Calu3 (cell line): ENCODE measurements at regions of chrX and their contacts with region 1.

Region 1: GRCh38 chrX:30889147-30890140 is at the start of gene TAB3:
- DNase-seq: peak; percentile 95
- H3K4me3 Mint-ChIP-seq: peak within 1 kb of the TSS; percentile 89
- H3K27ac Mint-ChIP-seq: peak within 1 kb of the TSS; percentile 86
- H3K4me1 Mint-ChIP-seq: peaks cover 41% of the 10 kb centered on the region
- H3K27me3 Mint-ChIP-seq: no peaks in the 10 kb centered on the region
- CTCF ChIP-seq: no peak
- total RNA-seq, gene TAB3: 30.9 and 32.9 TPM in 2 replicates

Region 2: DNA sequence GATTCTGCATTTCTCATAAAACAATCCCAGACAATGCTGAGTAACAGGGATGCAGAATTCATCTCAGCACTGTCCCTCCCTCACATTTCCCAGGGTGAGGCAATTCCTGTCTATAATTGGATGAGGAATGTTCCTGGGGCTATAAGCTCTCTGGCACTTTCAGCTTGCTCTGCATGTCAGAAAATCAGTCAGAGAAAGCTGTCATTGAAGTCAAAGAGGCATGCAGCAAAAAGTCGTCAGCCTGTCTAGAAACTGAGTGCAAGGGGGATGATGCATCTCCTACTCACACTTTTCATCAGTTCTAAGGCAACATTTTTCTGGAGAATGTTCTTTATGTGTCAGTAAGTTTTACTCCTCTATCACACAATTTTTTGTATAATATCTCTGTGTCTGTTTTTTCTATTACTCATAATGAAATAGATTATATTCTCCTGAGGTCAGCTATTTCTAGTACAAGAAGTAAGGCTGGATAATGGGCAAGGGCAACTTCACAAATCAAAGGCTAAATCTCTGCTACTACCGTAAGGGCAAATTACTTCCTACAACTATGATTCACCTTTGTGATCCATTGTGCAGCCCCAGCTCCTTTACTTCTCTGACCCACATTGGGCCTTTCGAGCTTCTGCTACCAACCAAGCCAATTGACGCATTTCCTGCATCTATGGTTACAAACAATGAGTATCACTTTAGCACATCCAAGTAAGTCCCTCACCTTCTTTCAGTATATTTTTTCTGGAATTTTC is 367.8 kb before region 1 on chrX:
- CTCF ChIA-PET with region 1: no interaction called
- intact Hi-C with region 1: no loop called
- DNase-seq: no peak
- H3K4me3 Mint-ChIP-seq: no peak overlapping the region
- H3K27ac Mint-ChIP-seq: no peak overlapping the region
- H3K4me1 Mint-ChIP-seq: no peaks in the 10 kb centered on the region
- H3K27me3 Mint-ChIP-seq: no peaks in the 10 kb centered on the region
- CTCF ChIP-seq: no peak

Region 3: GRCh38 chrX:30568136-30568535 is 321.3 kb before region 1 on chrX:
- CTCF ChIA-PET with region 1: no interaction called
- intact Hi-C with region 1: no loop called
- DNase-seq: no peak
- H3K4me3 Mint-ChIP-seq: no peak overlapping the region
- H3K27ac Mint-ChIP-seq: no peak overlapping the region
- H3K4me1 Mint-ChIP-seq: peaks cover 15% of the 10 kb centered on the region
- H3K27me3 Mint-ChIP-seq: no peaks in the 10 kb centered on the region
- CTCF ChIP-seq: no peak

Region 4: GRCh38 chrX:30713061-30713525 is 176.4 kb before region 1 on chrX:
- CTCF ChIA-PET with region 1: no interaction called
- intact Hi-C with region 1: no loop called
- DNase-seq: peak; percentile 70
- H3K4me3 Mint-ChIP-seq: no peak overlapping the region
- H3K27ac Mint-ChIP-seq: no peak overlapping the region
- H3K4me1 Mint-ChIP-seq: no peaks in the 10 kb centered on the region
- H3K27me3 Mint-ChIP-seq: no peaks in the 10 kb centered on the region
- CTCF ChIP-seq: peak; percentile 42

Region 5: GRCh38 chrX:30762755-30763154 is 126.7 kb before region 1 on chrX:
- CTCF ChIA-PET with region 1: no interaction called
- intact Hi-C with region 1: no loop called
- DNase-seq: no peak
- H3K4me3 Mint-ChIP-seq: no peak overlapping the region
- H3K27ac Mint-ChIP-seq: no peak overlapping the region
- H3K4me1 Mint-ChIP-seq: no peaks in the 10 kb centered on the region
- H3K27me3 Mint-ChIP-seq: no peaks in the 10 kb centered on the region
- CTCF ChIP-seq: no peak

Region 6: GRCh38 chrX:30957753-30958152 is 68.3 kb after region 1 on chrX:
- CTCF ChIA-PET with region 1: no interaction called
- intact Hi-C with region 1: loop called (anchors 5 kb)
- DNase-seq: peak; percentile 71
- H3K4me3 Mint-ChIP-seq: no peak overlapping the region
- H3K27ac Mint-ChIP-seq: peak overlapping the region; percentile 53
- H3K4me1 Mint-ChIP-seq: peaks cover 22% of the 10 kb centered on the region
- H3K27me3 Mint-ChIP-seq: no peaks in the 10 kb centered on the region
- CTCF ChIP-seq: no peak